Ascending aorta (tissue), 2 donors: ENCODE measurements at regions of chr4 and their contacts with region 1.

Region 1: GRCh38 chr4:173334085-173334772 is at the start of gene HMGB2:
- DNase-seq: peak; percentile 100
- H3K4me3 ChIP-seq: peak within 1 kb of the TSS; percentile 97 to 99
- H3K27ac ChIP-seq: peak within 1 kb of the TSS; percentile 93 to 98
- H3K4me1 ChIP-seq: peaks cover 0 to 17% of the 10 kb centered on the region in 2 donors
- H3K27me3 ChIP-seq: no peaks in the 10 kb centered on the region
- CTCF ChIP-seq: no peak
- total RNA-seq, gene HMGB2: 36.1 TPM

Region 2: GRCh38 chr4:173494013-173494970 is 160.1 kb after region 1 on chr4:
- intact Hi-C with region 1: loop called (anchors 5 kb)
- DNase-seq: peak in 1 of 2 donors; percentile 81
- H3K4me3 ChIP-seq: peak overlapping the region; percentile 56 to 63
- H3K27ac ChIP-seq: no peak overlapping the region
- H3K4me1 ChIP-seq: peaks cover 0 to 17% of the 10 kb centered on the region in 2 donors
- H3K27me3 ChIP-seq: no peaks in the 10 kb centered on the region
- CTCF ChIP-seq: peak; percentile 67 to 87 (median 76)